Adrenal gland (tissue), 19 donors: ENCODE measurements at regions of chr14 and their contacts with region 1.

Region 1: GRCh38 chr14:95561001-95561412 is 26.2 kb downstream of the GLRX5 start:
- DNase-seq: peak; percentile 84 to 97 (median 92)
- H3K4me3 ChIP-seq: no peak overlapping the region
- H3K27ac ChIP-seq: no peak overlapping the region
- H3K4me1 ChIP-seq: no peaks in the 10 kb centered on the region
- H3K27me3 ChIP-seq: no peaks in the 10 kb centered on the region
- CTCF ChIP-seq: peak; percentile 96 to 99 (median 98)
- POLR2A ChIP-seq: no peak

Region 2: DNA sequence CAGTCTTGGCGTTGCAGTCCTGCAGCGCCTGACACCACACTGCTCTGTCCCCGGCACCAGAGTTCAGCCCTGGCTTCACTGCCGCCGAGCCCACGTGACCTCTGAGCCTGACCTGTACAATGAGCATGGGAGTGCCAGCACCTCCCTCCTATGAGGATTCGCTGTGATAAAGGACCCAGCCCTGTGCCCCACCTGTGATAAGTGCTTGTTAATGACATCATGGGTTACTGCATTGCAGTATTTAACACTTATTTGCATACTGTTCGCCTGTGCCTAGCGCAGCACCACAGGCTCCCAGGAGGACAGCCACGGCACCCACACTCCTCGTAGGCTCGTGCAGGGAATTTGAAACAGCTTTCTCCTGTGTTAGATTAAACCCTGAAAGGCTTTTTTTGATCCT is 672.9 kb before region 1 on chr14:
- intact Hi-C with region 1: no loop called
- DNase-seq: peak in 3 of 7 donors; percentile 23 to 39 (median 32)
- H3K4me3 ChIP-seq: no peak overlapping the region
- H3K27ac ChIP-seq: no peak overlapping the region
- H3K4me1 ChIP-seq: peaks cover 0 to 4% of the 10 kb centered on the region in 2 donors
- H3K27me3 ChIP-seq: no peaks in the 10 kb centered on the region
- CTCF ChIP-seq: no peak
- POLR2A ChIP-seq: no peak

Region 3: GRCh38 chr14:95683793-95684192 is 122.8 kb after region 1 on chr14:
- intact Hi-C with region 1: loop called in 1 of 2 experiments (anchors 5 kb)
- DNase-seq: peak in 5 of 7 donors; percentile 44 to 69 (median 52)
- H3K4me3 ChIP-seq: no peak overlapping the region
- H3K27ac ChIP-seq: no peak overlapping the region
- H3K4me1 ChIP-seq: peaks cover 0 to 8% of the 10 kb centered on the region in 2 donors
- H3K27me3 ChIP-seq: no peaks in the 10 kb centered on the region
- CTCF ChIP-seq: peak; percentile 35 to 81 (median 65)
- POLR2A ChIP-seq: no peak

Region 4: DNA sequence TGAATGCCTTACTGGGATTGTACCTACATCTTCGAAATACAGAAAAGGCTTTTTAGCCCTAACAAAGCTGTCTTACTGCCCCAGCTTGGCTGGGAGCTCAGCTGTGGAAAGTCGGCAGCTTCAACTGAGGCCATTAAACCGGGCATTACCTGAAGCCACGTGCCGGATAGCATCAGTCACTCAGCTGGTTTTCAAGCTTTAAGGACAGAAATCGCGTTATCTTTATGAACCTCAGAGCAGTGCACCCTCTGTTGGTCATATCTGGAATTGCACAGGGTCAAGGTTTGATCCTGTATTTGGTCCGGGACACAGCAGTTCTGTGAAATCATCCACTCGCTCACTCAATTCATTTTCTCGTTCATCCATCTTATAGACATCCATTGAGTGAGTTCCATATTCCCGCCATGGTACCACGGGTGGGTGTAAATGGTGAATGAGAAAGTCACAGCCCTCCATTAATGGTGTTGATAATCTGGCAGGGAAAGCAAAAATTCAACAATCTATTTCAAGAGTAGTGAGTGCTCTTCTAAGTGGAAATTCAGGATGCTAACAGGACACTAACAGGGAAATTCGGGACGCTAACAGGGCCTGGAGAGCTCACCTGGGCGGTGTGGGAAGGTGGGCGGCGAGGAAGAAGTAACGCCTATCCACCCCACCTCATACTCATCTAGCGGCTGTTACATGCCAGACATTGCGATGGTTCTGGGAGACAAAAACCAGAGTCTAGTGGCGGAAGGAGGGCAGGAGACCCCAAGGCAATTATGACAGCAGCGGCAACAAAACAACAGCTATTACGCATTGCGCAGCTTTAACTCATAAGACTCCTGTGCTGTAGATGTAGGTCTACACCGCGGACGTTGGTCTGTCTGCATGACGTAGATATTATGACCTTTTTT is 213.5 kb after region 1 on chr14:
- intact Hi-C with region 1: loop called (anchors 5 to 10 kb)
- DNase-seq: peak; percentile 32 to 80 (median 56)
- H3K4me3 ChIP-seq: no peak overlapping the region
- H3K27ac ChIP-seq: no peak overlapping the region
- H3K4me1 ChIP-seq: no peaks in the 10 kb centered on the region
- H3K27me3 ChIP-seq: no peaks in the 10 kb centered on the region
- CTCF ChIP-seq: peak; percentile 81 to 90 (median 86)
- POLR2A ChIP-seq: no peak

Region 5: GRCh38 chr14:95784137-95784536 is 223.1 kb after region 1 on chr14:
- intact Hi-C with region 1: loop called (anchors 5 to 10 kb)
- DNase-seq: peak in 5 of 7 donors; percentile 13 to 38 (median 24)
- H3K4me3 ChIP-seq: no peak overlapping the region
- H3K27ac ChIP-seq: no peak overlapping the region
- H3K4me1 ChIP-seq: no peaks in the 10 kb centered on the region
- H3K27me3 ChIP-seq: no peaks in the 10 kb centered on the region
- CTCF ChIP-seq: no peak
- POLR2A ChIP-seq: no peak

Region 6: DNA sequence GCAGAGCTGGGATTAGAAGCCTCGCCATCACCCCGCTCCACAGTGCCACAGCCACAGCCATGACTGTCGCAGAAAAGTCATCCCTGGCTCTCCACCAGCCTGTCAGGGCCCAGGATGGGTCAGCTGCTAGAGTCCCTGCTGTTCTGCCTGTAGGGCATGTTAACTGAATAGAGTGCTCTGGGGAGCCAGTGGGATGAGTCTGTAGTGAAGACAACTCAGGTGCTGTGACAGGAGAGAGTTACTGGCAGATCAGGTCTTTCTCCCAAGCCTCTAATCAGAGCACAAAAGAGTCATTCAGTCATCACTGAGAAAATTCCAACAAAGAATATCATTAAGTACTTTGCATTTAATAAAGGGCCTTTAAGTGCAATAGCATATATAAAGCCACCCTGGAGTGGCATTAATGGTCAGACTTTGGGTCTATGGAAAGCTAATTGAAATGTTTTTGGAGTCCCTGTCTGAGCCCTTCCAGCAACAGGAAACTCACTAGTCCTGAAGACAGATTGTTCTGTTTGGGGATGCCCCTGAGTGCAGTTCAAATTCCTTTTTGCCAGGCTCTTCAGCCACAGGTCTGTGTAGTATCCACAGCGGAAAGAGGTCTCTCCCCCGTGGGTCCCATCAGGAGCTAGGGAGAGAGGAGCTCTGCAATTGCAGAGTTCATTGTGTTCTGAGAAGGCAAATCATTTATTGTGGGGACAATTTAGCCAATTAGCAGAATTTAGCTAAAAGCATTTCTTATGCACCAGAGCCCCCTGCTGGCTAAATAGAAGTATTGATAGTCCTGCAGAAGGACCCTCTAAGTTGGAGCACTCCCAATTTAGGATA is 433.0 kb after region 1 on chr14:
- intact Hi-C with region 1: loop called in 1 of 2 experiments (anchors 2 kb)
- DNase-seq: peak in 4 of 7 donors; percentile 39 to 50 (median 44)
- H3K4me3 ChIP-seq: no peak overlapping the region
- H3K27ac ChIP-seq: no peak overlapping the region
- H3K4me1 ChIP-seq: no peaks in the 10 kb centered on the region
- H3K27me3 ChIP-seq: no peaks in the 10 kb centered on the region
- CTCF ChIP-seq: peak; percentile 75 to 86 (median 78)
- POLR2A ChIP-seq: no peak